ENCODE measurements at regions of chr1 and their contacts with region 1.

Region 1: DNA sequence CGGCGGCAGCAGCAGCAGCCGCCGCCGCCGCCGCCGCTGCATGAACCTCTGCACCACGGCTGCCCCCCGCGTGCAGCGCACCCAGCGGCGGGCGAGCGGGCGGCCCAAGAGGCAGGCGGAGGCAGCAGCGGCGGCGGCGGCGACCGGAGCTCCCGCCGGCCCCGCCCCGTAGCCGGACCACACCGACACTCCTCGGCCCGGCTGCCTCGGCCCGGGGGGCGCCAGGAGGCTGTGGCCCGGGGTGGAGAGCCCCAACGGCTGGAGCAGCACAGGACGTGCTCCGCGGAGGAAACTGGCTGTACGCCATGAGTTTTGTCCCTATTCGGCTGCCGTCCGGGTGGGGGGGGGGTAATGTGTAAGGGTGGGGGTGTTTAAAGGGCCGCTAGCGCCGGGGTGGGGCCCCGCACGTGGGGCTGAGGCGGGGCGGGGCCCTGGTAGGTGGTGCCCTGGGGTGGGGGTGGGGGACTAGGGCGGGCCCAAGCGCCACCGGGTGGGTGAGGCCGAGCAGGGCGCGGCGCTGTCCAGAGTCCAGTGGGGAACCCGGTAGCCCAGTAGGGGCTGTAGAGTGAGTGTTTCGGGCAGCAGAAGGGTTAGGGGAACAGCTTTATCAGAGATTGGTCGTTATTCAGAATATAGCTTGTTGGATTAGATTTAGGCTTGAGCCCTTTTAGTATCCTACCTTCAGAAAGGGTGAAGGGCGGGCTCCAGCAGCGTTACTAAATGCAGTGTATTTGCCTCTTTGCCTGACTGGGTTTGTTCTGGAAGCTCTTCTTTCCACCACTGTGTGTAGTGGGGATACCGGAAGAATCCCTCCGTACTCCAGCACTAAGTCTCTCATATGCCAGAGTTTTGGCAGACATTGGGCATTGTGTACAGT is at the start of gene FAM78B:
- DNase-seq: peak; percentile 89
- total RNA-seq, gene FAM78B: 1.5 to 4.0 TPM

Region 2: GRCh38 chr1:165928075-165928731 is 238.7 kb before region 1 on chr1:
- intact Hi-C with region 1: loop called (anchors 5 kb)
- DNase-seq: peak; percentile 47

Region 3: DNA sequence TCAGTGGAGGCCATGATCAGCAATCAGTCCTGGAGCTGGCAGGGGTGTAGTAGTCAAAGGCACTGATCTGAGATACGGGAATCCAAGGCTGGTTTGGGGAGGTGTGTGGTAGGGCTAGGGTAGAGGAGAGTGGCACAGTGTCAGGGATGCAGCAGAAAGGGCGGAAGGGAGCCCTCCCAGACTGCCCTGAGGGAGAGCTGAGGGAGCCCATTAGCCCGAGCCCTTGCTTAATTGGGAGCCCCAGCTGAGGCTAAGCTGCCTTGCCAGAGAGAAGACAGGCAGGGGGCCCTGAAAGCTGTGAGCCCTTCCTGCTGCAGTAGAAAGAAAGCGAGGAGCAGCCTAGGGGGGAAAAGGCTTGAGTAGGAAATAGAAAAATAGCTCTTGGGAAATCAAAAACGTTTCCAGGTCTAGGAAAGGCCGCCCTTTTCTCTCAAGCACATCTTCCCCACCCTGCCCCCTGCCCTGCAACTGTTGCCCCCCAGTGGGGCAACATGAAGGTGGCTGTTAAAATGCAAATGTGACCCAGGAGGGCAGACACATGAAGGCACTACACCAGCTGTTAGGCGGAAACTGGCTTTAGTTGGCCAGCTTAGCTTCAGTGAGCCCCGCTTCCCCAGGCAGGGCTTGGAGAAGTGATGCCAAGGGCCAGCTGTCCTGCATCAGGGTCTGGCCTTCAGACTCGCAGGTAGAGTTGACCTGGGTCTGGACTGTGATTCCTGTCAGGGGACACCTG is 233.3 kb before region 1 on chr1:
- intact Hi-C with region 1: loop called (anchors 5 kb)
- DNase-seq: no peak